Caco-2 (cell line): ENCODE measurements at regions of chr10 and their contacts with region 1.

Region 1: GRCh38 chr10:79052291-79053080 is 16.3 kb upstream of the ZMIZ1 start:
- DNase-seq: peak; percentile 35 to 40
- H3K4me3 ChIP-seq: no peak overlapping the region
- H3K4me3 Mint-ChIP-seq: no peak overlapping the region
- H3K27ac Mint-ChIP-seq: no peak overlapping the region
- H3K4me1 ChIP-seq: peaks cover 62% of the 10 kb centered on the region
- H3K4me1 Mint-ChIP-seq: peaks cover 26% of the 10 kb centered on the region
- H3K27me3 ChIP-seq: no peaks in the 10 kb centered on the region
- H3K27me3 Mint-ChIP-seq: no peaks in the 10 kb centered on the region
- CTCF ChIP-seq: peak; percentile 26 to 28

Region 2: DNA sequence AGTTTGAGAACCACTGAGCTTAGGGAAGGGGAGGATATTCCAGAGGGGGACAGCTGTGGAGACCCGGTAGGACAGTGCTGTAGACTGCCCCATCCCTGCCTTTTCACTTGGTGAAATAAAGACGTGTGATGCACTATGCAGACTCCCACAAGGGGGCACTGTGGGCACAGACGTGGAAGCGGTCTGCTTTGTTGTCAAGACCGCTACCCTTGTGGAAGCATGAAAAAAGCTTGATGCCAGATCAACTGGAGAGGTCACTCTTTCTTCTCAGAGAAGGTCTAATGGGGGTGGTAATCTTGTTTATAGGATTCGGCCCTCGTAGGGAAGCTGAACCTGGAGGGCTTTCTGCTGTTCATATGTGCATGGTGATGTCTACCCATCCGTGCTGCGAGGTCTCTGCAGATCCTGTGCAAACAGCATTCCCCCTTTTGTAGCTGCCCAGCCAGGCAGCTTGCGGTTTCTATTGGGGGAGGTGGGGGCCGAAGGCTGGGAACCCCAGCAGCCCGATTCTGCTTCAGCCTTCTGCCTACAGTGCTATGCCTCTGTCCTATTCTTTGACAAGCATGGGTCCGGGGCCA is 1005.1 kb before region 1 on chr10:
- CTCF ChIA-PET with region 1: no interaction called
- POLR2A ChIA-PET with region 1: no interaction called
- intact Hi-C with region 1: loop called (anchors 10 kb)
- DNase-seq: peak; percentile 83 to 92
- H3K4me3 ChIP-seq: no peak overlapping the region
- H3K4me3 Mint-ChIP-seq: no peak overlapping the region
- H3K27ac Mint-ChIP-seq: no peak overlapping the region
- H3K4me1 ChIP-seq: no peaks in the 10 kb centered on the region
- H3K4me1 Mint-ChIP-seq: no peaks in the 10 kb centered on the region
- H3K27me3 ChIP-seq: no peaks in the 10 kb centered on the region
- H3K27me3 Mint-ChIP-seq: no peaks in the 10 kb centered on the region
- CTCF ChIP-seq: peak; percentile 91 to 94

Region 3: GRCh38 chr10:78656417-78657162 is 395.9 kb before region 1 on chr10:
- CTCF ChIA-PET with region 1: no interaction called
- POLR2A ChIA-PET with region 1: no interaction called
- intact Hi-C with region 1: no loop called
- DNase-seq: peak; percentile 46 to 69
- H3K4me3 ChIP-seq: no peak overlapping the region
- H3K4me3 Mint-ChIP-seq: no peak overlapping the region
- H3K27ac Mint-ChIP-seq: no peak overlapping the region
- H3K4me1 ChIP-seq: no peaks in the 10 kb centered on the region
- H3K4me1 Mint-ChIP-seq: no peaks in the 10 kb centered on the region
- H3K27me3 ChIP-seq: no peaks in the 10 kb centered on the region
- H3K27me3 Mint-ChIP-seq: no peaks in the 10 kb centered on the region
- CTCF ChIP-seq: no peak

Region 4: DNA sequence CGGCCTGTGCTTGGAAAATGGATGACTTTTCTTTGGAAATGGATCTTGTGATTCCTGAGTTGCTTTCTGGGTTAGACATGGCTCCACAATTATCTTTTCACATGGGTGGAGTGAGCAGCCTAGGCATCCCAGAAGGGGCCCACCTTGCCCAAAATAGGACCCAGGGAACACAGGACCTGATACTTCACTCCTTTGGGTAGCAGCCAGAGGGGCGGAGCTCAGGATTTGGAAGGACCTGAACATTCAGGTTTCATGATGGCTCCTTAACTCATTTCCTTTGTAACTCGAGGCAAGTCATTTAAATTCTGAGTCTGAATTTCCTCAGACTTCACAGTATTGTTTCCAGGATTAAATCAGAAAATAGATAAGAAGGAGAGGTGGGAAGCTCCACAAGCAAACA is 162.0 kb before region 1 on chr10:
- CTCF ChIA-PET with region 1: no interaction called
- POLR2A ChIA-PET with region 1: interaction called, 10 read pairs
- intact Hi-C with region 1: no loop called
- DNase-seq: no peak
- H3K4me3 ChIP-seq: no peak overlapping the region
- H3K4me3 Mint-ChIP-seq: no peak overlapping the region
- H3K27ac Mint-ChIP-seq: no peak overlapping the region
- H3K4me1 ChIP-seq: no peaks in the 10 kb centered on the region
- H3K4me1 Mint-ChIP-seq: peaks cover 23% of the 10 kb centered on the region
- H3K27me3 ChIP-seq: no peaks in the 10 kb centered on the region
- H3K27me3 Mint-ChIP-seq: no peaks in the 10 kb centered on the region
- CTCF ChIP-seq: no peak